CD4-positive, alpha-beta T cell (primary cell): ENCODE measurements at regions of chr1 and their contacts with region 1.

Region 1: DNA sequence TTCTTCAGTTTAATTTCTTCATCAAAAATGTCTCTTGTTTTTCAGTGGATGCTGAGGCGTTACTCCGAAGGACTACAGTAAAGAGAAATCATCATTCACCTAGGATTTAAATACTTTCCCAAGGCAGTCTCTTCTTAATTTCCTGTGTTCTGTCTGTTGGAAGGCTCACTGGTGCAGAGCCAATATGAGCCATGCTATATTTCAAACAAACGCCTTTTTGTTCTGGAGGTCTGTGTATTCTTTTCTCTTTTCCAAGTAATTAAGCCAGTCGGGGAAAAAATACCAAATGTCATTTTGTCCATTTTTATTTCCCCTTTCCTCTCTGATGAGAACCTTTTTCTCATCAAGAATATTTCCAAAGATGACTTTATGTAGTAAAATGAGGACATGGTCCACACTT is 206.5 kb downstream of the RWDD3 start:
- DNase-seq: no peak
- ATAC-seq: no peak
- H3K4me3 ChIP-seq: no peak overlapping the region
- H3K4me3 Mint-ChIP-seq: no peak overlapping the region
- H3K27ac ChIP-seq: no peak overlapping the region
- H3K27ac Mint-ChIP-seq: no peak overlapping the region
- H3K4me1 ChIP-seq: no peaks in the 10 kb centered on the region
- H3K4me1 Mint-ChIP-seq: no peaks in the 10 kb centered on the region
- H3K27me3 ChIP-seq: no peaks in the 10 kb centered on the region
- H3K27me3 Mint-ChIP-seq: no peaks in the 10 kb centered on the region
- CTCF ChIP-seq: no peak

Region 2: DNA sequence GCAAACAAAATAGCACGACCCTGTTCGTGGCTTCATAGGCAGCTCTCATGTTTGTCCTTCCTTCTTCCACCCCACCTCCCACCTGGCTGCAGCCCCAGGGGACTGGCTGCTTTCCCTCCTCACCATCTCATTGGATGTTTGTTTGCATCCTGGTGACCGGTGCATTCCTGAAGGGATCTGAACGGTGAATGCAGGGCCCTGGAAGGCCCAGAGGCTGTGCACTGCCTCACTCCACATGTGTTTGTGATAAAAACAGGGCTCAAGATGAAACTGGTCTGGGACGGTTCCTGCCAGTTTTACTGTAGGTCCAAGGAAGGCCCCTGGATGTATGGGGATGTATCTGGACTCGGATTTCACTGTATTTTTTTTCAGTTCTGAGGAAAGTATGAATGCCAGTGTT is 556.4 kb before region 1 on chr1:
- CTCF ChIA-PET with region 1: no interaction called
- POLR2A ChIA-PET with region 1: no interaction called
- intact Hi-C with region 1: no loop called
- DNase-seq: no peak
- ATAC-seq: no peak
- H3K4me3 ChIP-seq: no peak overlapping the region
- H3K4me3 Mint-ChIP-seq: no peak overlapping the region
- H3K27ac ChIP-seq: no peak overlapping the region
- H3K27ac Mint-ChIP-seq: peak overlapping the region; percentile 56
- H3K4me1 ChIP-seq: peaks cover 9% of the 10 kb centered on the region
- H3K4me1 Mint-ChIP-seq: peaks cover 15% of the 10 kb centered on the region
- H3K27me3 ChIP-seq: no peaks in the 10 kb centered on the region
- H3K27me3 Mint-ChIP-seq: no peaks in the 10 kb centered on the region
- CTCF ChIP-seq: no peak

Region 3: GRCh38 chr1:95278173-95279006 is 162.1 kb before region 1 on chr1:
- CTCF ChIA-PET with region 1: no interaction called
- POLR2A ChIA-PET with region 1: no interaction called
- intact Hi-C with region 1: no loop called
- DNase-seq: no peak
- ATAC-seq: no peak
- H3K4me3 ChIP-seq: no peak overlapping the region
- H3K4me3 Mint-ChIP-seq: no peak overlapping the region
- H3K27ac ChIP-seq: no peak overlapping the region
- H3K27ac Mint-ChIP-seq: no peak overlapping the region
- H3K4me1 ChIP-seq: no peaks in the 10 kb centered on the region
- H3K4me1 Mint-ChIP-seq: no peaks in the 10 kb centered on the region
- H3K27me3 ChIP-seq: no peaks in the 10 kb centered on the region
- H3K27me3 Mint-ChIP-seq: peaks cover 4% of the 10 kb centered on the region
- CTCF ChIP-seq: no peak

Region 4: GRCh38 chr1:95503278-95504030 is 62.9 kb after region 1 on chr1:
- CTCF ChIA-PET with region 1: no interaction called
- POLR2A ChIA-PET with region 1: no interaction called
- intact Hi-C with region 1: loop called in 1 of 2 experiments (anchors 10 kb)
- DNase-seq: no peak
- ATAC-seq: no peak
- H3K4me3 ChIP-seq: no peak overlapping the region
- H3K4me3 Mint-ChIP-seq: no peak overlapping the region
- H3K27ac ChIP-seq: no peak overlapping the region
- H3K27ac Mint-ChIP-seq: no peak overlapping the region
- H3K4me1 ChIP-seq: no peaks in the 10 kb centered on the region
- H3K4me1 Mint-ChIP-seq: no peaks in the 10 kb centered on the region
- H3K27me3 ChIP-seq: no peaks in the 10 kb centered on the region
- H3K27me3 Mint-ChIP-seq: no peaks in the 10 kb centered on the region
- CTCF ChIP-seq: no peak